ENCODE measurements at regions of chr3 and their contacts with region 1.

Region 1: GRCh38 chr3:46558184-46559043 is 7.7 kb downstream of the LRRC2 start:
- DNase-seq: peak in 6 of 10 donors; percentile 30 to 54 (median 46)
- H3K4me3 ChIP-seq: peak overlapping the region in 43 of 59 donors; percentile 8 to 52 (median 31)
- H3K27ac ChIP-seq: peak overlapping the region in 1 of 59 donors; percentile 10
- H3K27me3 ChIP-seq: no peaks in the 10 kb centered on the region
- CTCF ChIP-seq: peak in 50 of 56 donors; percentile 16 to 69 (median 40)

Region 2: DNA sequence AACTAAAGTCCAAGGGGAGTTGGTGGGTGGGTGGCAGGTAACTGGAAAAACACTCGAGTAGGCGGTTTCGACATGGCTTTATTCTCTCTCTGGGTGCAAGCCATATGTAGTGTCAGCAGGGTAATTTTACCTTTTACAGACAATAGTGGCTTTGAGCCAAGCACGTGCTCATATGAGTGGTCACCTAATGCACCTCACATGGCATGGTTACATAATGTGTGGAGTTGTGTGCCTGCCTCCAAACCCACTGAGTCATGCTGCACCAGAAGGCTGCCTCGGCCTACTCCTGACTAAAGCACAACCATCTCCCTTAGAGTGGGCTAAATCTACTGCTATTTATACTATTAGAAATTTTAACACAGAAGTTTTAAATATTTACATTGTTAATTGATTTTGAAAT is 134.8 kb before region 1 on chr3:
- intact Hi-C with region 1: no loop called
- DNase-seq: peak in 2 of 10 donors; percentile 37 to 51
- H3K4me3 ChIP-seq: no peak overlapping the region
- H3K27ac ChIP-seq: peak overlapping the region in 4 of 59 donors; percentile 30 to 46 (median 38)
- H3K27me3 ChIP-seq: no peaks in the 10 kb centered on the region
- CTCF ChIP-seq: no peak

Region 3: DNA sequence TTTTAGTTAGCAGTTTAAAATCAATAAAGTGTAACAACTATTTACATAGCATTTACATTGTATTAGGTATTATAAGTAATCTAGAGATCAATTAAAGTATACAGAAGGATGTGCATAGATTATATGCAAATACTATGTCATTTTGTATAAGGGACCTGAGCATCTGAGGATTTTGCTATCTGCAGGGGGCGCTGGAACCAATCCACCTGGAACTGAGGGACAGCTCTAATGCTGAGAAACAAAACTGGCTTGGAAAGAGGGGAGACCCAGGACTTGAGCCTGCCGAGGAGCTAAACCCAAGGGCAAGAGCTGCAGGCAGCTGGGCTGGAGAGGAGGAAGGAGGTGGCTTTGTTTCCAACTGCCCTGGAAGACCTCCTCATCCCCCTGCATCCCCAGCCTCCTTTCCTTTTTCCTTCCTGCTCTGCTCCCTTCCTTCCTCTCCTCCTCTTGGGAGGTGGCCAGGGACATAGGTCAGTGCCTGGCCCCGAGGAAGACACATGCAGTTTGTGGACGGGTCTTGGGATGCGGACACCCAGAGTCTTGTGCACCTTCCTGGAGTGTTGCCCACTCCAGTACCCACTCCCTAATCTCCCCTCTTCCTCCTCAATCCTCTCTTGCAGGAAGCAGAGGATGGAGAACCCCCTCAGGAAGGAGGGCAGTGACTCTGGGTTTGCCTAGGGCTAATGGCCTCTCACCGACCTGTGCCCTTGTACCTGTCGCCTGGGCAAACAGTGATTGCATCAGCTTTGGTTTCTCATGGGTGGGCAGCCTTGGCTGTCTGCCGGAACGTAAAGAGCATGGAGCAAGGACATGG is 61.5 kb before region 1 on chr3:
- intact Hi-C with region 1: loop called in 1 of 2 experiments (anchors 10 kb)
- DNase-seq: no peak
- H3K4me3 ChIP-seq: no peak overlapping the region
- H3K27ac ChIP-seq: no peak overlapping the region
- H3K27me3 ChIP-seq: peaks cover 0 to 4% (median 0%) of the 10 kb centered on the region in 45 donors
- CTCF ChIP-seq: peak in 8 of 56 donors; percentile 7 to 20 (median 14)

Measured in dorsolateral prefrontal cortex (tissue), 120 donors.